ENCODE measurements at regions of chr4 and their contacts with region 1.

Region 1: GRCh38 chr4:158729716-158730559 is 6.7 kb upstream of the PPID start:
- DNase-seq: peak; percentile 26 to 94 (median 74)

Region 2: DNA sequence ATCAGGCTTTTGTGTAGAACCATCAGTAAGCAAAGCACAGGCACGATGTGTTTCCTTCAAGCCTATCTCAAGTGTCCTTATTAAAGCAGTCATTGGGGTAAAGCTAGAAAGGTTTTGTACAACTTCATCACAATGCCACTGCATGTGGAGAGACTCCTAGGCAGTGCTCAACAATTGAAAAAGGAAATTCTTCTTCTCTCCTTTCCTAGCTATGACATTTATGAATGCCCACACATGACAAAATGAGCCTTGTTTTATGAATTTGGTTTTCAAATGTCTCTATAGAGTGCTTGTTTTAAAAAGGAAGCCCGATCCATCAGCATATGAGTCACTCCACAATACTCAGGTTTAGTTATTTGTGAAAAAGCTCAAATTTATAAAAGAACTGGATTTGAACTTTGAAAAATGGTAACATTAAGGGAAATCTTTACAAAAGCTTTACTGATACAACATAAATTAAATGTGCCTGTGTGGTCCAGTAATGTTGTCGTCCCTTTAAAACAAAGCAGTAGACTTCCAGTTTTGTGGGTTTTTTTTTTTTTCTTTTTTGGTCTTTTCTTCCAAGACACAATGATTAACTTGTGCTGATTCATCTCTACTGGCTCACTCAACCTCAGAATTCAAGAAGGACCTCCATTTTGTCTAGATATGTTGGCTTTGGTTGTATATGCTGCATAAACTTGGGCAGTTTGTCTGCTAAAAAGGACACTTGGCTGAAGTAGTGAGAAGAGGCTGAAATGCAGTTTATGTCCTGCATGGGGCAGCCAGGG is 830.9 kb before region 1 on chr4:
- intact Hi-C with region 1: no loop called
- DNase-seq: no peak

Region 3: GRCh38 chr4:158768555-158769174 is 38.7 kb after region 1 on chr4 and contains the start of gene FNIP2:
- intact Hi-C with region 1: loop called (anchors 5 kb)
- DNase-seq: peak; percentile 67 to 98 (median 85)

Region 4: GRCh38 chr4:158850800-158851644 is 121.1 kb after region 1 on chr4:
- intact Hi-C with region 1: loop called (anchors 1 kb)
- DNase-seq: no peak

Region 5: DNA sequence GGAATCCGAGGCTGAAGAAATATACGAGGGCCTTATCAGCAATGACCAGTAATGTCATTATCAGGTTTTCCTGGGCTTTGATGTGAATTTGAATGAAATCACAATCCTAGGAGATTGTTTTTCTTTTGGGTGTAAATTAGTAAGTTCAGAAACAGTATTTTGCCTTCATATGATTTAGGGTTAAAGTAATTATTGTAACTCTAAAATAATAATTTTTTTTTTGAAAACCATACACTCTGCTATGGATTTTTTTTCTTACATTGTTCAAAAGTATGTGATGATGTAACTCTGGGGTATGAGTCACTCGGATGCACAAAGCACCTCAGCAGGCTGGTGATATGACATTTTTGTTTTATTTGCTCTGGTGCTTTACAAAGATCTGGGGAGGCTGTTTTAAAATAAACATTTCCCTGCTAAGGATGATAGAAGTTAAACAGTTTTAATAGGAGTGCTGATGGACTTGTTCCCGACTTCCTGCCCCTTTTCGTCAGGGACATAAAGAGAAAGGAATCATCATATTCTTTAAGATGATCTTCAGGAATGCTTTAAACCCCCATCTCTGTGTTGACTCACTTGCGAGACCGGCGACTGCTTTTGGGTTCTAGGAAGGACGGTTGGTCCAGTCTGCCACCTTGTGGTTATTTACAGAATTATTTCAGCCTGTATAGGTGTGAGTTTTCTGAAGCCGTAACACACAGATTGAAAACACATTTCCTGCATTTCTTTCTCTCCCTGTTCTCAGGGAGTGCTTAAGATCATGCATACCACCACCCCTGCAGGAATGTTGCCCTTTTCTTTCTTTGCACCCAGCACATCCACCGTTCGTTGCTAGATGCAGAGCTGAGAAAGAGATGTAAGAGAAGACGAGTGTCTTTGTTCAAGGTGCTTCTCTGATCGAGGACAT is 445.4 kb after region 1 on chr4:
- intact Hi-C with region 1: loop called (anchors 5 kb)
- DNase-seq: peak in 9 of 10 donors; percentile 35 to 92 (median 64)

Region 6: DNA sequence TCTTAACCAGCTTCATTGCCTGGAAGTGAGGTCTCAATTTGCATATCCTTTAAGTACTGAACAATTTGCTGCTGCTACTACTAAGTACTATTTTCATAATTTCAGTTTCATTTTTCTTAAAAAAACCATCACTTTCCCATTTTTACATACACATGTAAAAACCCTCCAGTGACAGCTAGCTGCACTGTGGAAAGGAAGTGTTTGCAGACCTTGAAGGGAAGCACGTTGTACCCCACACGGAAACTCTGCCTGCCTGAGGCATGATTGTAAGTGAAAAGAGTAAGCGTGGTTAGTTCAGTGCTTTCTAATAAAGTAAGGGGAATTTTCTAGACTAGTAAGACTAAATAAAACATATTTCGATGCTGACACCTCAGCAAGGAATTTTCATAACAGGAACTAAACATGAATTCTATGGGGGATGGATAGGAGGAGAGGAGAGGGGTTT is 476.5 kb after region 1 on chr4:
- intact Hi-C with region 1: loop called (anchors 1 kb)
- DNase-seq: no peak

Region 7: GRCh38 chr4:159446266-159446976 is 716.5 kb after region 1 on chr4:
- intact Hi-C with region 1: loop called (anchors 5 kb)
- DNase-seq: peak in 8 of 10 donors; percentile 37 to 88 (median 40)

Measured in posterior cingulate gyrus (tissue), 11 donors.